ENCODE measurements at regions of chr19 and their contacts with region 1.

Region 1: DNA sequence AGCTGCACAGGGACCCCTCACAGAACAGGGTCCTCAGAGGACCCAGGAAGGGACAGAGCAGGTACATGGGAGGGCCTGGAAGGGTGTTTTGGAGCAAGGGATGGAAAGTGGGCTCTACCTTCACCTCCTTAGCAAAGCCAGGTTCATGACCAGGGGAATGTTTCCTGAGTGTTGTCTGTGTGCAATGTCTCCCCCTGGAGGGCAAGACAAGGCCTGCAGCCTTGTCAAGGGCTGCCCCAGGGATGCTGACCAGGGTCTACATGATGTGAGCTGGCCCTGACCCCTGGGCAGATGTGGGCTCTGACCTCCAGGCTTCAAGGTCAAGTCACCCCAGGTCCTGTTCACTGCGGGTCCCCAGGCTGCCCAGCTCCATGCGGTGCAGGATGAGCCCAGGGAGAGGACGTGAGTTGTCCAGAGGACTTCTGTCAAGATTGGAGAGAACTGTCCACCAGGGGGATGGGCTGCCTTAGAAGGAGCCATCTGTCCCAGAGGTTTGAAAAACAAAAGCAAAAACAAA is 1.0 kb upstream of the CEACAM1 start:
- DNase-seq: peak; percentile 81
- ATAC-seq: peak; percentile 68
- H3K4me3 Mint-ChIP-seq: peak overlapping the region; percentile 60
- H3K27ac Mint-ChIP-seq: peak overlapping the region; percentile 94
- H3K4me1 Mint-ChIP-seq: peaks cover 24% of the 10 kb centered on the region
- H3K27me3 Mint-ChIP-seq: no peaks in the 10 kb centered on the region

Region 2: GRCh38 chr19:42244347-42245220 is 284.7 kb before region 1 on chr19:
- CTCF ChIA-PET with region 1: no interaction called
- POLR2A ChIA-PET with region 1: no interaction called
- intact Hi-C with region 1: no loop called
- DNase-seq: peak; percentile 96
- ATAC-seq: peak; percentile 49
- H3K4me3 Mint-ChIP-seq: peak overlapping the region; percentile 93
- H3K27ac Mint-ChIP-seq: peak overlapping the region; percentile 94
- H3K4me1 Mint-ChIP-seq: peaks cover 42% of the 10 kb centered on the region
- H3K27me3 Mint-ChIP-seq: no peaks in the 10 kb centered on the region

Region 3: DNA sequence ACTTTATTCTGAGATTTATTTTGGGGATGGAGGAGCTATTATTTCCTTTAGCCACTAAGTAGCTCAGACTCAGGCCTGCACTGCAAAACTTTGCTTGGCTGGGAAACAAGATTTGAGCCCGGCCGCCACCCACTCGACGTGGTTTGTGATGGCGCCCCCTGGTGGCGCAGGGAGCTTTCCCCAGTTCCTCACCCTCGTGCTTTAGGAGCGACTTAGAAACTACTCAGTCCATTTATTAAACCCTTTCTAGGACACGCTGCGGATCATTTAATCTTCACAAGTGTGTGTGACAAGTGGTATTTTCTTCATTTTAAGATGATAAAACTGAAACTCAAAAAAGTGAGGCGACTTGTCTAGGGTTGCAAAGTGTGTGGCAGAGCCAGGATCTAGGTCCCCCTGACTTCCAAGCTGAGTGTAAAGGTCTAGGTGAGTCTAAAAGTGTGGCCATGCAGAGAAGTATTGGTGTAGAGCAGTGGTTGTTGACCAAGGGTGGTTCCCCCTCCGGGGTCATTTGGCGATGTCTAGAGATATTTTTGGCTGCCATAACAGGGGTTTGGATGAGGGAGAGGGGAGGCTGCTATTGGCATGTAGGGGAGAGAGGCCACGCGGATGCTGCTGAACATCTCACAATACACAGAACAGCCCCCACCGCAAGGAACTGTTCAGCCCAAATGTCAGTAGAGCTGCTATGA is 88.8 kb before region 1 on chr19:
- CTCF ChIA-PET with region 1: interaction called, 42 read pairs
- POLR2A ChIA-PET with region 1: no interaction called
- intact Hi-C with region 1: no loop called
- DNase-seq: peak; percentile 91
- ATAC-seq: peak; percentile 71
- H3K4me3 Mint-ChIP-seq: no peak overlapping the region
- H3K27ac Mint-ChIP-seq: no peak overlapping the region
- H3K4me1 Mint-ChIP-seq: peaks cover 27% of the 10 kb centered on the region
- H3K27me3 Mint-ChIP-seq: no peaks in the 10 kb centered on the region

Region 4: GRCh38 chr19:42455621-42456081 is 73.7 kb before region 1 on chr19:
- CTCF ChIA-PET with region 1: interaction called, 107 read pairs
- POLR2A ChIA-PET with region 1: no interaction called
- intact Hi-C with region 1: loop called (anchors 1 kb)
- DNase-seq: no peak
- ATAC-seq: peak; percentile 49
- H3K4me3 Mint-ChIP-seq: no peak overlapping the region
- H3K27ac Mint-ChIP-seq: no peak overlapping the region
- H3K4me1 Mint-ChIP-seq: peaks cover 4% of the 10 kb centered on the region
- H3K27me3 Mint-ChIP-seq: no peaks in the 10 kb centered on the region

Region 5: GRCh38 chr19:42487032-42487797 is 42.1 kb before region 1 on chr19:
- CTCF ChIA-PET with region 1: no interaction called
- POLR2A ChIA-PET with region 1: no interaction called
- intact Hi-C with region 1: no loop called
- DNase-seq: peak; percentile 18
- ATAC-seq: no peak
- H3K4me3 Mint-ChIP-seq: no peak overlapping the region
- H3K27ac Mint-ChIP-seq: no peak overlapping the region
- H3K4me1 Mint-ChIP-seq: no peaks in the 10 kb centered on the region
- H3K27me3 Mint-ChIP-seq: no peaks in the 10 kb centered on the region

Region 6: DNA sequence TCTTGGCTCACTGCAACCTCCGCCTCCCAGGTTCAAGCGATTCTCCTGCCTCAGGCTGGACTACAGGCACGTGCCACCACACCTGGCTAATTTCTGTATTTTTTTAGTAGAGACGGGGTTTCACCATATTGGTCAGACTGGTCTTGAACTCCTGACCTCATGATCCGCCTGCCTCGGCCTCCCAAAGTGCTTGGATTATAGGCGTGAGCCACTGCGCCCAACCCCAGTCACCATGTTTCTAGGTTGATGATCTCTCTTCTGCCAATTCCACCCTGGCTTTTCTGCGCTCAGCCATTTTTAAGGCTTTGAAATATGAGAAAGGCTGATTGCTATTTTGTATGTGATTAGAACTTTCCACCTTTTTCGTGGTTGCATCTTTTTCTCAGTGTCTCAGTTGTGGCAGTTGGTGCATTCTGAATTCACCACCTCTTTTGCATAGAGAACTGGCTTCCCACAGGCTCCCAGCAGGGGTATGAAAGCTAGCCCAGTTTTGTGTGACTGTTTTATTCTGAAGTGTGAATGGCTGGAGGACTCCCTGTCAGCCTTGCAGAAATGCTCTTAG is 16.5 kb before region 1 on chr19:
- CTCF ChIA-PET with region 1: interaction called, 22 read pairs
- POLR2A ChIA-PET with region 1: no interaction called
- intact Hi-C with region 1: no loop called
- DNase-seq: peak; percentile 43
- ATAC-seq: peak; percentile 70
- H3K4me3 Mint-ChIP-seq: no peak overlapping the region
- H3K27ac Mint-ChIP-seq: peak overlapping the region; percentile 42
- H3K4me1 Mint-ChIP-seq: peaks cover 24% of the 10 kb centered on the region
- H3K27me3 Mint-ChIP-seq: no peaks in the 10 kb centered on the region

Measured in activated CD4-positive, alpha-beta T cell treated with anti-CD3 and anti-CD28 coated beads for 36 hours (primary cell).